ENCODE measurements at regions of chr20 and their contacts with region 1.

Region 1: DNA sequence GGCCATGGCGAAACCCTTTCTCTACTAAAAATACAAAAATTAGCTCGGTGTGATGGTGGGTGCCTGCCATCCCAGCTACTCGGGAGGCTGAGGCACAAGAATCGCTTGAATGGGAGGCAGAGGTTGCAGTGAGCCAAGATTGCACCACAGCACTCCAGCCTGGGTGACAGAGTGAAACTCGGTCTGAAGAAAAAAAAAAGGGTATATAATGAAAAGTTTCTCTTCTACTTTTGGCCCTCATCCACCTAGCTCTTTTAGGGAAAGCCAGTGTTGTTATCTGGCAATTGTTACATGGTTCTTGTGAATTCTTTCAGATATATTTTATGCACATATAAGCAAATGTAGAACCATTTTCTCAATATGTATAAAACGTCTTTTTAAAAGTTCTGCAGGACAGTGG is 19.0 kb downstream of the KIF3B start:
- DNase-seq: no peak
- H3K4me3 ChIP-seq: no peak overlapping the region
- H3K27ac ChIP-seq: no peak overlapping the region
- H3K4me1 ChIP-seq: no peaks in the 10 kb centered on the region
- H3K27me3 ChIP-seq: no peaks in the 10 kb centered on the region
- CTCF ChIP-seq: no peak

Region 2: DNA sequence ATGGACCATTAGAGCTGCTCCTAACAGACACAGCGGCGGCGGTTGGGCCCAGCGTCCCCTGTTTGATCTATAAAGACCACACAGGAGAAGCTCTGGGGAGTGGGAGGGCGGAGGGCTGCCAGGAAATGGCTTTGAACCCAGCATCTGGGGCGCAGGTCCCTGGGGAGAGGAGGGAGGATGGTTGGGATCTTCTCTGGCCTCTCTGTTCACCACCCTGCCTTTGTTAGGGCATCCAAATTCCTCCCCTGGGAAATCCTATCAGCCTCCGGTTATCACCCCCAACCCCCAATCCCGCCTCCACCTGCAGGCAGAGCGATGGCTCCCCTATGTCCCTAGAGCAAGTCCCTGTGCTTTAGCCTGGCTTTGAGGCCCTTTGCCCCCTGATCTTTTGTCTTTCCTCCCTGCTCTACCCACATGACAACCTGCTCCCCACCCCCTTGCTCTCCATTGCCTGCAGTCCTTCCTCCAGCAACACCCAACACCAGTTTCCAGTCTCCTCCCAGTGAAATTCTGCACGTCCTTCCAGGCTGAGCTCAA is 321.4 kb before region 1 on chr20:
- CTCF ChIA-PET with region 1: no interaction called
- POLR2A ChIA-PET with region 1: no interaction called
- intact Hi-C with region 1: no loop called
- DNase-seq: no peak
- H3K4me3 ChIP-seq: no peak overlapping the region
- H3K27ac ChIP-seq: no peak overlapping the region
- H3K4me1 ChIP-seq: no peaks in the 10 kb centered on the region
- H3K27me3 ChIP-seq: peaks cover 43% of the 10 kb centered on the region
- CTCF ChIP-seq: no peak

Region 3: GRCh38 chr20:32285621-32286371 is 10.6 kb before region 1 on chr20:
- CTCF ChIA-PET with region 1: interaction called, 11 read pairs
- POLR2A ChIA-PET with region 1: no interaction called
- intact Hi-C with region 1: no loop called
- DNase-seq: no peak
- H3K4me3 ChIP-seq: no peak overlapping the region
- H3K27ac ChIP-seq: no peak overlapping the region
- H3K4me1 ChIP-seq: no peaks in the 10 kb centered on the region
- H3K27me3 ChIP-seq: no peaks in the 10 kb centered on the region
- CTCF ChIP-seq: no peak

Region 4: GRCh38 chr20:32312718-32313424 is 16.5 kb after region 1 on chr20:
- CTCF ChIA-PET with region 1: no interaction called
- POLR2A ChIA-PET with region 1: no interaction called
- intact Hi-C with region 1: no loop called
- DNase-seq: no peak
- H3K4me3 ChIP-seq: no peak overlapping the region
- H3K27ac ChIP-seq: no peak overlapping the region
- H3K4me1 ChIP-seq: no peaks in the 10 kb centered on the region
- H3K27me3 ChIP-seq: no peaks in the 10 kb centered on the region
- CTCF ChIP-seq: no peak